GM12878 (cell line): ENCODE measurements at regions of chr4 and their contacts with region 1.

Region 1: GRCh38 chr4:54322818-54323417 is 93.8 kb downstream of the PDGFRA start:
- DNase-seq: no peak
- ATAC-seq: peak; percentile 95
- H3K4me3 ChIP-seq: no peak overlapping the region
- H3K27ac ChIP-seq: no peak overlapping the region
- H3K4me1 ChIP-seq: no peaks in the 10 kb centered on the region
- H3K27me3 ChIP-seq: no peaks in the 10 kb centered on the region
- CTCF ChIP-seq: peak; percentile 71 to 83 (median 75)
- EP300 ChIP-seq: no peak
- POLR2A ChIP-seq: no peak
- RAD21 ChIP-seq: peak; percentile 88

Region 2: GRCh38 chr4:54233277-54233696 is 89.6 kb before region 1 on chr4:
- CTCF ChIA-PET with region 1: no interaction called
- POLR2A ChIA-PET with region 1: no interaction called
- RAD21 ChIA-PET with region 1: no interaction called
- SMC1A ChIA-PET with region 1: no interaction called
- in situ Hi-C with region 1: no loop called
- intact Hi-C with region 1: no loop called
- DNase-seq: no peak
- ATAC-seq: peak; percentile 97
- H3K4me3 ChIP-seq: peak overlapping the region; percentile 63; the same call in 1 of the 2 replicates
- H3K27ac ChIP-seq: no peak overlapping the region
- H3K4me1 ChIP-seq: 0 out of 2 replicates have a peak, but pooled peaks cover 7% of the 10 kb centered on the region
- H3K27me3 ChIP-seq: peaks cover 18 to 22% of the 10 kb centered on the region in 2 experiments
- CTCF ChIP-seq: peak; percentile 74 to 84 (median 83)
- EP300 ChIP-seq: no peak
- POLR2A ChIP-seq: no peak
- RAD21 ChIP-seq: peak; percentile 73

Region 3: GRCh38 chr4:54346445-54346844 is 23.5 kb after region 1 on chr4:
- CTCF ChIA-PET with region 1: no interaction called
- POLR2A ChIA-PET with region 1: no interaction called
- RAD21 ChIA-PET with region 1: no interaction called
- SMC1A ChIA-PET with region 1: no interaction called
- in situ Hi-C with region 1: no loop called
- intact Hi-C with region 1: no loop called
- DNase-seq: no peak
- ATAC-seq: no peak
- H3K4me3 ChIP-seq: no peak overlapping the region
- H3K27ac ChIP-seq: no peak overlapping the region
- H3K4me1 ChIP-seq: no peaks in the 10 kb centered on the region
- H3K27me3 ChIP-seq: no peaks in the 10 kb centered on the region
- CTCF ChIP-seq: no peak
- EP300 ChIP-seq: no peak
- POLR2A ChIP-seq: no peak
- RAD21 ChIP-seq: no peak

Region 4: GRCh38 chr4:54371173-54371572 is 48.3 kb after region 1 on chr4:
- CTCF ChIA-PET with region 1: no interaction called
- POLR2A ChIA-PET with region 1: no interaction called
- RAD21 ChIA-PET with region 1: no interaction called
- SMC1A ChIA-PET with region 1: no interaction called
- in situ Hi-C with region 1: no loop called
- intact Hi-C with region 1: no loop called
- DNase-seq: no peak
- ATAC-seq: no peak
- H3K4me3 ChIP-seq: no peak overlapping the region
- H3K27ac ChIP-seq: no peak overlapping the region
- H3K4me1 ChIP-seq: no peaks in the 10 kb centered on the region
- H3K27me3 ChIP-seq: no peaks in the 10 kb centered on the region
- CTCF ChIP-seq: no peak
- EP300 ChIP-seq: no peak
- POLR2A ChIP-seq: no peak
- RAD21 ChIP-seq: no peak

Region 5: GRCh38 chr4:54440394-54441136 is 117.6 kb after region 1 on chr4:
- CTCF ChIA-PET with region 1: interaction called, 31 read pairs
- POLR2A ChIA-PET with region 1: no interaction called
- RAD21 ChIA-PET with region 1: interaction called, 3 read pairs
- SMC1A ChIA-PET with region 1: interaction called, 5 read pairs
- in situ Hi-C with region 1: loop called (anchors 5 kb)
- intact Hi-C with region 1: loop called (anchors 1 kb)
- DNase-seq: no peak
- ATAC-seq: no peak
- H3K4me3 ChIP-seq: no peak overlapping the region
- H3K27ac ChIP-seq: no peak overlapping the region
- H3K4me1 ChIP-seq: no peaks in the 10 kb centered on the region
- H3K27me3 ChIP-seq: peaks cover 0 to 2% of the 10 kb centered on the region in 2 experiments; a peak in 1 of 4 replicates
- CTCF ChIP-seq: peak; percentile 40 to 44 (median 41)
- EP300 ChIP-seq: no peak
- POLR2A ChIP-seq: no peak
- RAD21 ChIP-seq: peak; percentile 59

Region 6: GRCh38 chr4:54840992-54841768 is 518.3 kb after region 1 on chr4:
- CTCF ChIA-PET with region 1: no interaction called
- POLR2A ChIA-PET with region 1: no interaction called
- RAD21 ChIA-PET with region 1: no interaction called
- SMC1A ChIA-PET with region 1: no interaction called
- in situ Hi-C with region 1: no loop called
- intact Hi-C with region 1: loop called (anchors 5 kb)
- DNase-seq: no peak
- ATAC-seq: no peak
- H3K4me3 ChIP-seq: no peak overlapping the region
- H3K27ac ChIP-seq: no peak overlapping the region
- H3K4me1 ChIP-seq: no peaks in the 10 kb centered on the region
- H3K27me3 ChIP-seq: no peaks in the 10 kb centered on the region
- CTCF ChIP-seq: peak in 1 of 3 experiments; percentile 18; a peak in 1 of 6 replicates
- EP300 ChIP-seq: no peak
- POLR2A ChIP-seq: no peak
- RAD21 ChIP-seq: peak; percentile 40; the same call in 1 of the 2 replicates

Region 7: GRCh38 chr4:55175779-55176231 is 852.9 kb after region 1 on chr4:
- CTCF ChIA-PET with region 1: no interaction called
- POLR2A ChIA-PET with region 1: no interaction called
- RAD21 ChIA-PET with region 1: no interaction called
- SMC1A ChIA-PET with region 1: no interaction called
- in situ Hi-C with region 1: no loop called
- intact Hi-C with region 1: no loop called
- DNase-seq: no peak
- ATAC-seq: no peak
- H3K4me3 ChIP-seq: no peak overlapping the region
- H3K27ac ChIP-seq: no peak overlapping the region
- H3K4me1 ChIP-seq: no peaks in the 10 kb centered on the region
- H3K27me3 ChIP-seq: no peaks in the 10 kb centered on the region
- CTCF ChIP-seq: no peak
- EP300 ChIP-seq: no peak
- POLR2A ChIP-seq: no peak
- RAD21 ChIP-seq: no peak

Region 8: DNA sequence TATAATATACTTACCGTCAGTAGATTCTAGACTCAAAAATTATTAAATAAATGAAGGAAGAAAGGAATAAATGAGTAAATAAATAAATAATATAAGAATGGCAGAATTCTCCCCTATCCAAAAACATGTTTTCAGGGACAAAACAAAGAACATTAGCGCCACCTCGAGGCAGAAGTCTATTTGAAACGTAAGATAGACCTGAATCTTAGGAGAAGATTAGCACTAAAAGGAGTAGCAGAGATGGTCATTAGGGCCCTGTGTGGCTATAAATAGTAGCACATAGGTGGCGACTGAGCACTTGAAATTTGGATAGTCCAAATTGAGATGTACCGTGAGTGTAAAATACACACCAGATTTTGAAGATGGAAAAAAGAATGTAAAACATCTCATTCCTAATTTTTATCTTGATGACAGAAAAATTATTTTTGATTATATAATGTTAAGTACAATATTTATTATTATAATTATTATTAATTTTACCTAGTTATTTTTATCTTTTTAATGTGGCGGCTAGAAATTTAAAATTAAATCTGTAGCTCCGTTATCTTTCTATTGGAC is 998.9 kb after region 1 on chr4:
- CTCF ChIA-PET with region 1: no interaction called
- POLR2A ChIA-PET with region 1: no interaction called
- RAD21 ChIA-PET with region 1: no interaction called
- SMC1A ChIA-PET with region 1: no interaction called
- in situ Hi-C with region 1: loop called (anchors 10 kb)
- intact Hi-C with region 1: loop called (anchors 10 kb)
- DNase-seq: peak; percentile 2
- ATAC-seq: peak; percentile 64
- H3K4me3 ChIP-seq: no peak overlapping the region
- H3K27ac ChIP-seq: no peak overlapping the region
- H3K4me1 ChIP-seq: no peaks in the 10 kb centered on the region
- H3K27me3 ChIP-seq: no peaks in the 10 kb centered on the region
- CTCF ChIP-seq: peak; percentile 38 to 45 (median 43); a peak in 4 of 6 replicates
- EP300 ChIP-seq: no peak
- POLR2A ChIP-seq: no peak
- RAD21 ChIP-seq: peak; percentile 76